Caco-2 (cell line): ENCODE measurements at regions of chr14 and their contacts with region 1.

Region 1: DNA sequence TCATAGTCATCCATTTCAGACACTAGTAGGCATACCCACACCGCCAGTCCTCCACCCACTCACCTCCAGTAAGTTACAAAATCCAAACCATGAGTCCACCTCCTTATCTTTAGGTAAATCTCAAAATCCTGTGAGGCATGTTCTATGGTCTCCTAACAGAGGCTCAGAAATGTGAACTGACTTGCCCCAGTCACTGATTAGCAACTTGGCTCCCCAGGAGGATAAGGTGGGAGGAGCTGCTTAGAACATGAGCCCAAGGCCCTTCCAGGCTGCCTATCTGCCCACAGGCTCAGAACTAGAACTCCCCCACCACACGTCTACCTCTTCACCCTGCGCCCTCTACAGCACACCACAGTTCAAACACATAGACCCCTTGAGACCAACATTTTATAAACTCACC is 19.9 kb downstream of the SETD3 start:
- DNase-seq: peak; percentile 77 to 80
- H3K4me3 ChIP-seq: no peak overlapping the region
- H3K4me3 Mint-ChIP-seq: peak overlapping the region; percentile 12
- H3K27ac Mint-ChIP-seq: peak overlapping the region; percentile 62
- H3K4me1 ChIP-seq: peaks cover 38% of the 10 kb centered on the region
- H3K4me1 Mint-ChIP-seq: peaks cover 25% of the 10 kb centered on the region
- H3K27me3 ChIP-seq: no peaks in the 10 kb centered on the region
- H3K27me3 Mint-ChIP-seq: no peaks in the 10 kb centered on the region
- CTCF ChIP-seq: peak in 1 of 2 experiments; percentile 12

Region 2: GRCh38 chr14:99271951-99272631 is 188.7 kb before region 1 on chr14 and contains the start of gene BCL11B:
- CTCF ChIA-PET with region 1: no interaction called
- POLR2A ChIA-PET with region 1: no interaction called
- intact Hi-C with region 1: no loop called
- DNase-seq: peak; percentile 51 to 68
- H3K4me3 ChIP-seq: peak within 1 kb of the TSS; percentile 52
- H3K4me3 Mint-ChIP-seq: peak within 1 kb of the TSS; percentile 69
- H3K27ac Mint-ChIP-seq: no peak within 1 kb of the TSS
- H3K4me1 ChIP-seq: peaks cover 20% of the 10 kb centered on the region
- H3K4me1 Mint-ChIP-seq: peaks cover 5% of the 10 kb centered on the region
- H3K27me3 ChIP-seq: peaks cover 5% of the 10 kb centered on the region
- H3K27me3 Mint-ChIP-seq: peaks cover 39% of the 10 kb centered on the region
- CTCF ChIP-seq: peak; percentile 16 to 40
- total RNA-seq, gene BCL11B: 0.05 TPM in 1 of 2 replicates, not detected in the other

Region 3: GRCh38 chr14:99441157-99441870 is 19.5 kb before region 1 on chr14:
- CTCF ChIA-PET with region 1: no interaction called
- POLR2A ChIA-PET with region 1: no interaction called
- intact Hi-C with region 1: loop called (anchors 2 kb)
- DNase-seq: peak in 1 of 2 experiments; percentile 38
- H3K4me3 ChIP-seq: no peak overlapping the region
- H3K4me3 Mint-ChIP-seq: no peak overlapping the region
- H3K27ac Mint-ChIP-seq: no peak overlapping the region
- H3K4me1 ChIP-seq: no peaks in the 10 kb centered on the region
- H3K4me1 Mint-ChIP-seq: no peaks in the 10 kb centered on the region
- H3K27me3 ChIP-seq: no peaks in the 10 kb centered on the region
- H3K27me3 Mint-ChIP-seq: no peaks in the 10 kb centered on the region
- CTCF ChIP-seq: peak in 1 of 2 experiments; percentile 64

Region 4: DNA sequence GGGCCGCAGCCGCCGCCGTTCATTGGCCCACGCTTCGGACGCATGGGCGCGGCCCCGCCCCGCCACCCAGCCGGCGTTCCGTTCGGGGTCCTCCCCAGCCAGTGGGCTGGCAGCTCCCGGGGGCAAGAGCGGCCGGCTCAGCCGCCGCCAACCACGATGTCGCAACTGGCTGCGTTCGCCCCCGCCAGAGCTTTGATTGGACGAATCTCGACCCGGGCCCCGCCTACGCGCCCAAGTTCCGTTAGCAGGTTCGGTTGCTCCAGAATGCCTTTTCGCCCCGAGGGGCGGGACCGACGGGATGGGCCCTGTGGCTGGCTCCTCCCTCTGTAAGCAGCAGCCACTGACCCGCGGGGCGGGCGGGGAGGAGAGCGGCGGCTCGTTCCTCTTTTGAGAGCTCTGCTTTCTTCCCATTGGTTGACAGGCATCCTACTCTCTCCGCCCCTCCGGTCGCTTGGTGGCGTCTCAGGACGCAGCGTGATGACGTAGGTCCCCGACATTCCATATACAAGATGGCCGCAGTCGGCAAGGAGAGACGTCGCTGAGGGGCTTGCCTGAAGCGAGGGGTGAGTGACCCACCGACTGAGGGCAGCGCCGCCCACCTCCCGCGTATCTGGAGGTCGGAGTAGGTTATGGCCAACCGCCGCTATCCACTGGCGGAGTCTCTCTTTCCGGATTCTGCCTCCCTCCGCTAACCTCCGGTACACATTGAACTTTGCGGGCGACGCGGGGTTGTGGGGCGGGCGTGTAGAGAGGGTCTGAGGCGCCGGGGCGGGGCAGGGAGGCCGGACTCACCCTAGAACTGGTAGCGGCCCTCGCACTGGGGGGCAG is 20.3 kb after region 1 on chr14 and contains the start of gene CCNK:
- CTCF ChIA-PET with region 1: interaction called, 6 read pairs
- POLR2A ChIA-PET with region 1: interaction called, 18 read pairs
- intact Hi-C with region 1: loop called (anchors 1 kb)
- DNase-seq: peak; percentile 100
- H3K4me3 ChIP-seq: peak within 1 kb of the TSS; percentile 92
- H3K4me3 Mint-ChIP-seq: peak within 1 kb of the TSS; percentile 95
- H3K27ac Mint-ChIP-seq: peak within 1 kb of the TSS; percentile 100
- H3K4me1 ChIP-seq: peaks cover 13% of the 10 kb centered on the region; the same call in 1 of the 2 replicates
- H3K4me1 Mint-ChIP-seq: peaks cover 32% of the 10 kb centered on the region
- H3K27me3 ChIP-seq: no peaks in the 10 kb centered on the region
- H3K27me3 Mint-ChIP-seq: no peaks in the 10 kb centered on the region
- CTCF ChIP-seq: no peak
- total RNA-seq, gene CCNK: 95.4 and 104 TPM in 2 replicates